AG04449 (cell line): ENCODE measurements at regions of chr12 and their contacts with region 1.

Region 1: GRCh38 chr12:68807576-68808387 is at the start of gene MDM2:
- DNase-seq: no peak
- H3K4me3 ChIP-seq: peak within 1 kb of the TSS; percentile 97
- CTCF ChIP-seq: peak; percentile 86

Region 2: GRCh38 chr12:68745904-68746571 is 61.7 kb before region 1 on chr12 and contains the start of gene SLC35E3:
- CTCF ChIA-PET with region 1: interaction called, 9 read pairs
- POLR2A ChIA-PET with region 1: interaction called, 10 read pairs
- DNase-seq: peak; percentile 17
- H3K4me3 ChIP-seq: peak within 1 kb of the TSS; percentile 83
- CTCF ChIP-seq: no peak

Region 3: GRCh38 chr12:68792952-68793835 is 14.6 kb before region 1 on chr12:
- CTCF ChIA-PET with region 1: interaction called, 37 read pairs
- POLR2A ChIA-PET with region 1: interaction called, 5 read pairs
- DNase-seq: no peak
- H3K4me3 ChIP-seq: no peak overlapping the region
- CTCF ChIP-seq: no peak

Region 4: GRCh38 chr12:68831272-68831671 is 23.5 kb after region 1 on chr12:
- CTCF ChIA-PET with region 1: interaction called, 38 read pairs
- POLR2A ChIA-PET with region 1: interaction called, 4 read pairs
- DNase-seq: no peak
- H3K4me3 ChIP-seq: no peak overlapping the region
- CTCF ChIP-seq: no peak

Region 5: DNA sequence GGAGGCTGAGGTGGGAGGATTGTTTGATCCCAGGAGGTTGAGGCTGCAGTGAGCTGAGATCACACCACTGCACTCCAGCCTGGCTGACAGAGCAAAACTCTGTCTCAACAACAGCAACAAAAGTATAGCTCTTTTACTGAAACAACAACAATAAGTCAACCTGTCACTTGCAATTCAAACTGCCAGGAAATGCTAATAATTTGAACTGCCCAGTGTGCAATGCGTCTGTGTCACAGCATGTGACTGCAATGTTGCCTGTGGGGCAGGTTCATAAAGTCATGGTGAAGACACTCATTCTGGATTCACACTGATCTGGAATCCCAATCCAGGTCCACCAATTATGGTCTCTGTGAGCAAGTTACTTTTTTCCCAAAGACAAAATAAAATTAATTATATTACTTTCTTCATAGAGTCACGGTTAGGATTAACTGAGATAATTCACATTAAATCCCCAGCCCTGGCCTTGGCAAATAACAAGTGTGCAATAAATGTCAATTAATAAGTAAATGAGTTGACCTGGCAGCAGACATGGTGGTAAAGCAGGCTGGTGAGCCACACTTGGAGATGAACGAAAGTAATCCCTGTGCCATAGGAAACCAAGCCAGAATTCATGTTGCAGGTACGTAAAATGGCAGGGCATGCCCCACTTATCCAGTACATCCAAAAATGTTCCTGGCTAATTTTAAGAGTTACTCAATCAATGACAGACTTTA is 342.5 kb after region 1 on chr12:
- CTCF ChIA-PET with region 1: no interaction called
- POLR2A ChIA-PET with region 1: no interaction called
- DNase-seq: no peak
- H3K4me3 ChIP-seq: no peak overlapping the region
- CTCF ChIP-seq: no peak